ACHN (cell line): ENCODE measurements at regions of chr12 and their contacts with region 1.

Region 1: GRCh38 chr12:32755654-32756475 is at the start of gene YARS2:
- DNase-seq: peak; percentile 100

Region 2: GRCh38 chr12:32568241-32568640 is 187.6 kb before region 1 on chr12:
- in situ Hi-C with region 1: no loop called
- DNase-seq: peak; percentile 25

Region 3: DNA sequence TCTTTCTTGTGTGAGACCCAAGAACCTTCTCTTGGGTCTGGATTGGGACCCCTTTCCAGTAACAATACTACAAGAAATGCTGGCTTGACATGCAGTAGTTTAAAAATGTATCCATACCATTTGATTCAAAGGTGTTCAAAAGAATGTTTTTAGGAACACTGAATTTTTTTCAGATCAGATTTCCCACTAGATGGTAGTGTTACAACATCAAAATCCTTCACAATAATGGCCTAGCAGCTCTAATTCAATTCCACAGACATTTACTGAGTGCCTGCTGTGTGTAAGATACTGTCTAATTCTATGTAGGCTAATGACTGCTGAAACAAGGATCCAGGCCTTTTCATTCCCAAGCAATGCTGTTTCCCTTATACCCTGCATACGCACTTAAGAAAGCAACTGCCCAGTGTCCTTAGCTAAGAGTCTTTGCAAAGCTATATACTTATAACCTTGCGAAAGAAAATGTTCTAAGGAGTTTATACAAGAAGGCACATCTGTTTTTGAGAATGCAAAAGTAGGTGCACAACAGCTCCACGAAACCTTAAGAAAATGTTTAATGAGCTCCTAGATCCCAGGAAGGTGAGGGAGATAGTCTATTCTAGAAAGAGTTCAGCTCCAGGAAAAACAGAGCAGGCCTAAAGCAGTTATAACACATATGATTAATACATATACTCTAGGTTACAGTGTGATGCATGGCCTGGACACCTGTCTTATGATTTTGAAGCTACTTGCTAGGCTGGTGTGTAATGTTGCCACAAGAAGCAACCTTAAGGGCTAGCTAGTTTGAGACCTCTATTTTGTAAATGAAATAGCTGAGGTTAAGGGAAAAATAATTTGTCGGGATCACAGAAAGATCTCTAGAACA is 191.6 kb after region 1 on chr12:
- in situ Hi-C with region 1: loop called (anchors 25 kb)
- DNase-seq: peak; percentile 51